Posterior cingulate gyrus (tissue), 11 donors: ENCODE measurements at regions of chr2 and their contacts with region 1.

Region 1: GRCh38 chr2:201532686-201533304 is 81.3 kb downstream of the STRADB start:
- DNase-seq: no peak

Region 2: DNA sequence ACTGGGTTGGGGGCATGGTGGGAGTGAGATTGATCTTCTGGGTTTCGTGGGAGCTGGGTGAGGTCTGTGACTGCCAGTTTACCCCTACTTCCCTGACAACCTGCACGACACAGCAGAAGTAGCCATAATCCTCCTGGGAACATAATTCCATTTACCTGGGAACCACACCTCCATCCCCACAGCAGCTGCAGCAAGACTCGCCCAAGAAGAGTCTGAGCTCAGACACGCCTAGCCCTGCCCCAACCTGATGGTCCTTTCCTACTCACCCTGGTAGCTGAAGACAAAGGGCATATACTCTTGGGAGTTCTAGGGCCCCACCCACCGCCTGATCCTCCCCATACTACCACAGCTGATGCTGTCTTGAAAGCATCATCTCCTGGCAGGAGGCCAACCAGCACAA is 219.4 kb before region 1 on chr2:
- intact Hi-C with region 1: no loop called
- DNase-seq: no peak

Region 3: DNA sequence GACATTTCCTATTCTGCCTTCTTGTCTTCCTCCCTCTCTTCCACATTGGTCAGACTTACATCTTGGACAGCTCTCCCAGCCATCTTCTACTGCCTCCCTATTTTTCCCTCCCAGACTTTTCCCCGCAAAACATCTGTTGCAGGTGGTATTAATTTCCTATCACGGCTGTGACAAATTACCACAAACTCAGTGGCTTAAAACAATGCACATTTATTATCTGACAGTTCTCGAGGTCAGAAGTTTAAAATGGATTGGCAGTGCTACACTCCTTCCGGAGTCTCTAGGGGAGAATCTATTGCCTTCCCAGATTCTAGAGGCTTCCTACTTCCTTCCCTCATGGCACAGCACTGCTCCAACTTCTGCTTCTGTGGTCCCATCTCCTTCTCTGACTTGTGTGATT is 48.0 kb before region 1 on chr2:
- intact Hi-C with region 1: loop called (anchors 2 kb)
- DNase-seq: no peak

Region 4: DNA sequence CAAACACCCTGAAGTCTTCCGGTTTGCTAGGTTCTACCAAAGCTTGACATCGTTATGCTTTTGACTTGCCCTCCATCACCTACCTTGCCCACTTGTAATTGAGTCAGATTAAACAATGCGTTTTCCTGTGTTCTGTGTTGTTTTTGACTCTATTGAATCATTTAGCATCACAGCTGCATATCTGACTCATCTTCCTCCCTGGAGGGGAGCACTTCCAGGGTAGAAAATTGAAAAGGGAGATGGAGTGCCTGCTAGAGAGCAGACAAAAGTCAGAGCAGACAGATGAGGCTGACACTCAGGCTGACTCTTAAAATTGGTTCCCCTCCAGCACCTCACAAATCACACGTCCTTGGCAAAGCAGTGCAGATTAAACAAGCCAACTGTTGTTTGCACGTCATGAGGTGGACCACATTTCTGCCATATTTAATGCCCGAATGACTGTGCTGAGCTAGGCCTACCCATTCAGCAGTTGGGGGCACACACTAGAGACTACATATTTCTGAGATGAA is 163.4 kb after region 1 on chr2:
- intact Hi-C with region 1: no loop called
- DNase-seq: no peak